WTC11 (cell line): ENCODE measurements at regions of chr15 and their contacts with region 1.

Region 1: GRCh38 chr15:88440021-88440420 is 27.2 kb downstream of the MRPL46 start:
- DNase-seq: no peak
- ATAC-seq: no peak
- H3K4me3 Mint-ChIP-seq: no peak overlapping the region
- H3K27ac Mint-ChIP-seq: no peak overlapping the region
- H3K4me1 Mint-ChIP-seq: peaks cover 7% of the 10 kb centered on the region; the same call in 1 of the 2 replicates
- H3K27me3 Mint-ChIP-seq: peaks cover 22% of the 10 kb centered on the region
- CTCF ChIP-seq: no peak

Region 2: GRCh38 chr15:88246666-88247446 is 193.2 kb before region 1 on chr15:
- CTCF ChIA-PET with region 1: interaction called, 15 read pairs
- POLR2A ChIA-PET with region 1: no interaction called
- DNase-seq: peak; percentile 84
- ATAC-seq: peak; percentile 89
- H3K4me3 Mint-ChIP-seq: peak overlapping the region; percentile 52
- H3K27ac Mint-ChIP-seq: no peak overlapping the region
- H3K4me1 Mint-ChIP-seq: peaks cover 17% of the 10 kb centered on the region
- H3K27me3 Mint-ChIP-seq: peaks cover 3% of the 10 kb centered on the region; the same call in 1 of the 2 replicates
- CTCF ChIP-seq: peak; percentile 94

Region 3: DNA sequence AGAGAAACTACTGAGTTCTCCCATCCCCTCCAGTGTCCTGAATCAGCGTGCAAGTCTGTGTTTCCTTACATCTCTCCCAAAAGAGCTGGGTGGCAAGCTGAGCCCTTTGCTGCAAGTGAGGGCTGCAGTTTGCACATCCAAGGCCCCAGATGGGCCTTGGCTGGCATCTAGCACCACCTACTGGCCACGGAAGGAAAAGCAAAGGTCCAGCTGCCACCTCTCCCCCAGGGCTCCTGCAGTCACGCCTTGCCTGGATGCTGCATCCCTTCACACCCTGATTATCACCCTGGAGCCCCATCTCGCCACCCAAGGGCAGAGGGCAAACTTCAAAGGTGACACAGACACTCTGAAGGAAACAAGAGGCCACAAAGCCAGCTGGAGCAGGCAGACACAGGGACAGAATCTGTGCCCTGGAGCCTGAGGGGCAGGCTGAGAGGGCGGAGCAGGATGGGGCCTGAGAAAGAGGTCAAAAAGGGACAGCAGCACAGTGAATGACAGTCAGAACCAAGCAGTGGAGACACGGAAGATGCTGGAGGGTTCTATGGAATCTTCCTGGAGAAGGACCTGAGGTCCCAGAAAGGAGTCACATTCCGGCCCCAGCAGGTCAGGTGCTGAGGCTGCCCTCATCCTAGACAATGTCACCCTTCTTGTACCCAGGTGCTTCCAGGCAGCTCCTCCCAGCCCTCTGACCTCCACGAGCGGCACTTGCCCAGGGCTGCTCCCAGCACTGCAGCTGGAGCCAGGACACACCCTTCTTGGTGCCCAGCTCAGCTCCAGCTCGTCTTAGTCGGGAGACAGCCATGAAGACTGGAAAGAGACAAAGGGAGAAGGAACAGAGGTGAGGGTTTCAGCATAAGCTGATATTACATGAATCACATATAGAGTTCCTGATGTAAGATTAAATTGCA is 165.2 kb before region 1 on chr15:
- CTCF ChIA-PET with region 1: interaction called, 18 read pairs
- POLR2A ChIA-PET with region 1: no interaction called
- DNase-seq: peak; percentile 87
- ATAC-seq: peak; percentile 94
- H3K4me3 Mint-ChIP-seq: no peak overlapping the region
- H3K27ac Mint-ChIP-seq: no peak overlapping the region
- H3K4me1 Mint-ChIP-seq: no peaks in the 10 kb centered on the region
- H3K27me3 Mint-ChIP-seq: peaks cover 10% of the 10 kb centered on the region
- CTCF ChIP-seq: peak; percentile 87

Region 4: DNA sequence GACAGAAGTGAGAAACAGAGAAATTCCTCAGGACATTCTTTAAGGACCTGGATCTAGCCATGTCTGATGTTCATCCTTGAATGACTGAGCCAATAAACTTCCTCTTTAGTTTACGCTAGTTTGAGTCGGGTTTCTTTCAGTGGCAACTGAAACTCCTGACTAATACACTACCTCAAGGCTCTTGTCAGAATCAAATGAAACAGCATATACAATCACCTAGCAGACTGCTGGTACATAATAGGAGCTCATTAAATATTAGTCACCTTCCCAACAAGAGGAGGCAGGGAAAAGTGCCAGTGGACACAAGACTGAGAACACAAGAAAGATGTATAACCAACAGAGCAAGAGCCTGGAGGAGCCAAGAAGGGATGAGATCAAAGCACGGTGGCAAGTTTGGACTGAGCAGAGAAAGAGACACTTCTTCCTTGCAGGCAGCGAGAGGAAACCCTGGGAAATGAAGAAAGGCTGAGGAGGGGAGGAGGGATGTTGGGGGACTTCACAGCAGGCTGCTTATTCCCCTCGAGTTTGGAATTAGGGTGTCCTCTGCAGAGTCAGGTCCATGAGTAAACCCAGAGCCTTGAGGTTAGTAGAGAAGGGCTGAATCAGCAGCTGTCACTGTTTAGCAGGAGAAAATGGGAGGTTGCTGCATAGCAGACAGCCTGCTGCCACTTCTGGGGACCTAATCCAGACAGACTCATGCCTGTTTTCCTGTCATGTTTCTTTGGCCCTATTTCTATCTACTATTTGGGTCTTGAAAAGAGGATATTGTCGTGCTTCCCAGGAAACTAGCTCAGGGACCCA is 46.1 kb before region 1 on chr15:
- CTCF ChIA-PET with region 1: interaction called, 21 read pairs
- POLR2A ChIA-PET with region 1: no interaction called
- DNase-seq: no peak
- ATAC-seq: no peak
- H3K4me3 Mint-ChIP-seq: no peak overlapping the region
- H3K27ac Mint-ChIP-seq: no peak overlapping the region
- H3K4me1 Mint-ChIP-seq: peaks cover 5% of the 10 kb centered on the region; the same call in 1 of the 2 replicates
- H3K27me3 Mint-ChIP-seq: no peaks in the 10 kb centered on the region; the same call in 1 of the 2 replicates
- CTCF ChIP-seq: no peak

Region 5: DNA sequence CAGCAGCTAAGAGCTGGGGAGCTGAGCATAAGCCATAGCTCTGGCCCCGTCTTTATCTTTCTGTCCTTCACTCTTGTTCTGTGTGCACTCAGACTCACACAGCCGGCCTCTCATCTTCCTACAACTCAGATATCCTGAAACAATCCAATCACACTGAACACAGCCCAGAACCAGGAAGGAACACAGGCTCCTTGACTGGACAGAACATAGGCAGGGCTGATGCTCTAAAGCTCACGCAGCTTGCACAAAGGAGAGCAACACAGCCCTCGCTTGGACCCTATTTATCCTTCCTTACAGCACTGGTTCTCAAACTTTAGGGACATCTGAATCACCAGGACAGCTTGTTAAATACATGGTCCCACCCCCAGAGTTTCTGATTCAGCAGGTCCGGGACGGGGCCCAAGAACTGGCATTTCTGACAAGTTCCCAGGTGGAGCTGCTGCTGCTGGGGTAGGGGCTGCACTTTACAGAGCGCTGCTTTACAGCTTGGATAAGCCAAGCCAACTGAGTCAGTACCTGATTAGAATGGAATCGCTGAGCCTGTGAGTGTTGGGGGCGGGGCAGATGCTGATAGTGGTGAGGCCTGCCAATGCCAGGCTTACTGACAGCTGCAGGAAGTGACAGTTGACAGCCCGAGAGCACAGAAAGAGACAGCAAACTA is 37.9 kb before region 1 on chr15:
- CTCF ChIA-PET with region 1: interaction called, 21 read pairs
- POLR2A ChIA-PET with region 1: no interaction called
- DNase-seq: peak; percentile 24
- ATAC-seq: peak; percentile 53
- H3K4me3 Mint-ChIP-seq: no peak overlapping the region
- H3K27ac Mint-ChIP-seq: no peak overlapping the region
- H3K4me1 Mint-ChIP-seq: peaks cover 18% of the 10 kb centered on the region
- H3K27me3 Mint-ChIP-seq: no peaks in the 10 kb centered on the region
- CTCF ChIP-seq: no peak

Region 6: DNA sequence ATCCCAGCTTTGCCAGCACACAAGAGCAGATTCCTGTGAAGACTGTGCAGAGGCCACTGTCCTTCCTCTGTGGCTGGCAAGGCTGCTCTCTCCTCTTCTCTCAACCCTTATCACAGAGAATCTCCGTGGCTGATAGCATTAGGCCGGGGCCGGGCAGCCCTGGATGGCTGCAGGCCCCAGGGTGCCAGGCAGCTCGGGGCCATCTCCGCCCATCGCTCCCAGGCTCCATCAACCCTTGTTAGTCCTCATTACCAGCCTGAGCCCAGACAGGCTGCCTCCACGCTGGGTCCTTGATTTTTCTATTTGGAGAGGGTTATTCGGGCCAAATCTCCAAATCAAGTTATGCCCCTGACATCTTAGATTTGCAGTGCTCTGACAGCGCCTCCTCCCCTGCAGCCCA is 12.0 kb before region 1 on chr15:
- CTCF ChIA-PET with region 1: interaction called, 13 read pairs
- POLR2A ChIA-PET with region 1: no interaction called
- DNase-seq: no peak
- ATAC-seq: no peak
- H3K4me3 Mint-ChIP-seq: no peak overlapping the region
- H3K27ac Mint-ChIP-seq: no peak overlapping the region
- H3K4me1 Mint-ChIP-seq: 0 out of 2 replicates have a peak, but pooled peaks cover under 1% of the 10 kb centered on the region
- H3K27me3 Mint-ChIP-seq: peaks cover 6% of the 10 kb centered on the region; the same call in 1 of the 2 replicates
- CTCF ChIP-seq: no peak